ENCODE measurements at regions of chr3 and their contacts with region 1.

Region 1: DNA sequence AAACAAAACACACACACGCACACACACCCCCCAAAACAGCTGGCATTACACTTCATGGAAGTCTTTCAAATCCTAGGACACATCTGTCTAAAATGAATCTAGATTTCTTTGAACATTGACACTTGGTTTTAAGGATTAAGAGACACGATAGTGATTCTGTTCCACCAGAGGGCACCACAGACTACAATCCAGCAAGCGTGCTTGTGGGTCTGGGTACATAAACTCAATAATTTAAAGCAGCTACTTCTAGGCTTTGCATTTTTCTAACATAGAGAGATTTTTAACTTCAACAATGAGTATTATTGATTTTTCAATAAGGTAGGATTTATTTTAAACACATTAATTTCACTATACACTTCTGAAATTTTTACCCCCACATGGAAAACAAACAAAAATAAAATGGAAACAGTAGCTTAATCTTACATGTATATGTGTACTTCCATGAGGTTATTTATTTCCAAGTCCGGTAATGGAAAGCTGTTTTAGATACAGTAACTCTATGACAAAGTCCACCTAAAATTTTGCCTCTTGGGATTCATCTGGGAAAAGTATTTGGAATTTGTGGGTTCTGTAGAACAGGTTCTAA is 564.0 kb upstream of the TGFBR2 start:
- DNase-seq: peak; percentile 43 to 55 (median 44)
- H3K4me3 ChIP-seq: no peak overlapping the region
- H3K4me3 Mint-ChIP-seq: no peak overlapping the region
- H3K27ac ChIP-seq: no peak overlapping the region
- H3K27ac Mint-ChIP-seq: no peak overlapping the region
- H3K4me1 ChIP-seq: no peaks in the 10 kb centered on the region
- H3K4me1 Mint-ChIP-seq: no peaks in the 10 kb centered on the region
- H3K27me3 ChIP-seq: peaks cover 2% of the 10 kb centered on the region
- H3K27me3 Mint-ChIP-seq: peaks cover 24 to 26% of the 10 kb centered on the region in 2 donors

Region 2: DNA sequence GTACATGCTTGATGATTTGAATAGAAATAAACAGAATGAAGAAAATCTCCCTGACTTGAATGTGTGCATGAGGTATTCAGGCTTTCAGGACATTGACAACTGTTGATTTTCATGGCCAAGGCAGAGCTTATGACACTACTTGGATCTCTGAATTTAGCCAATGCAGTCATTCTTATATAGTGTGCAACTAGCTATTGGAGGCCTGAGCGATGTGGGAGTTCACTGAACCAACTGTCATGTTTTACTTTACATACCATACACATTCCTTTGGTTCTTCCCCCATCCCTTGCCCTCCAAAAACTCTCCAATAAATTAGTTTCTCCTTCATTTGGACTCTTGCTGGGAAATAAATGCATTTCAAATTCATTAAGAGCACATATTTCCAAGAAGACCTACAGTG is 301.1 kb before region 1 on chr3:
- CTCF ChIA-PET with region 1: no interaction called
- POLR2A ChIA-PET with region 1: no interaction called
- intact Hi-C with region 1: no loop called
- DNase-seq: no peak
- H3K4me3 ChIP-seq: no peak overlapping the region
- H3K4me3 Mint-ChIP-seq: no peak overlapping the region
- H3K27ac ChIP-seq: no peak overlapping the region
- H3K27ac Mint-ChIP-seq: no peak overlapping the region
- H3K4me1 ChIP-seq: no peaks in the 10 kb centered on the region
- H3K4me1 Mint-ChIP-seq: no peaks in the 10 kb centered on the region
- H3K27me3 ChIP-seq: no peaks in the 10 kb centered on the region
- H3K27me3 Mint-ChIP-seq: no peaks in the 10 kb centered on the region

Region 3: GRCh38 chr3:30146978-30147377 is 104.6 kb after region 1 on chr3:
- CTCF ChIA-PET with region 1: no interaction called
- POLR2A ChIA-PET with region 1: no interaction called
- intact Hi-C with region 1: no loop called
- DNase-seq: no peak
- H3K4me3 ChIP-seq: no peak overlapping the region
- H3K4me3 Mint-ChIP-seq: no peak overlapping the region
- H3K27ac ChIP-seq: no peak overlapping the region
- H3K27ac Mint-ChIP-seq: no peak overlapping the region
- H3K4me1 ChIP-seq: no peaks in the 10 kb centered on the region
- H3K4me1 Mint-ChIP-seq: no peaks in the 10 kb centered on the region
- H3K27me3 ChIP-seq: no peaks in the 10 kb centered on the region
- H3K27me3 Mint-ChIP-seq: no peaks in the 10 kb centered on the region

Region 4: GRCh38 chr3:30751610-30752299 is 709.4 kb after region 1 on chr3:
- CTCF ChIA-PET with region 1: interaction called, 40 read pairs
- POLR2A ChIA-PET with region 1: no interaction called
- intact Hi-C with region 1: loop called (anchors 1 kb)
- DNase-seq: peak in 4 of 5 donors; percentile 29 to 33 (median 30)
- H3K4me3 ChIP-seq: no peak overlapping the region
- H3K4me3 Mint-ChIP-seq: no peak overlapping the region
- H3K27ac ChIP-seq: no peak overlapping the region
- H3K27ac Mint-ChIP-seq: no peak overlapping the region
- H3K4me1 ChIP-seq: no peaks in the 10 kb centered on the region
- H3K4me1 Mint-ChIP-seq: peaks cover 0 to 1% (median 0%) of the 10 kb centered on the region in 4 donors
- H3K27me3 ChIP-seq: no peaks in the 10 kb centered on the region
- H3K27me3 Mint-ChIP-seq: peaks cover 7 to 8% of the 10 kb centered on the region in 2 donors

Measured in CD4-positive, alpha-beta memory T cell (primary cell).